ENCODE measurements at regions of chr12 and their contacts with region 1.

Region 1: DNA sequence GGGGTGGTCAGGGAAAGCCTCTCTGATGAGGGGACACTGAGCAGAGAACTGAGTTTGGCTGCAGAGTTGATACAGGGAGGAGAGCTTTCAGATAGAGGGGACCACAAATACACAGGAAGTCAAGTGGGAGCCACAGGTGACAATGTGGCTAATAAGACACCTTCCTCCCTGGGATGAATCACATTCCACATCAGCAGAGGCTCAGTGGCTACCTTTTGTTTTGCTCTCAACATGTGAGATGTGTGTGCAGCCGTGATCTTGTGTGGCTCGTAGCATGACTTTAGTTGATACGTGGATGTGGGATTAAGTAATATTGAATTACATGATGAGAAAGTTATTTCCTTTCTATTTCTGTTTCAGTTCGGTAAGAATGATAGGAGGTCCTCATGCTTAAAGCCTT is 7.5 kb downstream of the CRADD start:
- DNase-seq: no peak
- H3K4me3 Mint-ChIP-seq: peak overlapping the region; percentile 30
- H3K27ac Mint-ChIP-seq: no peak overlapping the region
- H3K4me1 Mint-ChIP-seq: peaks cover 36% of the 10 kb centered on the region
- H3K27me3 Mint-ChIP-seq: no peaks in the 10 kb centered on the region

Region 2: GRCh38 chr12:93699271-93700145 is 14.8 kb after region 1 on chr12:
- CTCF ChIA-PET with region 1: interaction called, 3 read pairs
- intact Hi-C with region 1: loop called (anchors 2 kb)
- DNase-seq: no peak
- H3K4me3 Mint-ChIP-seq: no peak overlapping the region
- H3K27ac Mint-ChIP-seq: no peak overlapping the region
- H3K4me1 Mint-ChIP-seq: peaks cover 37% of the 10 kb centered on the region
- H3K27me3 Mint-ChIP-seq: no peaks in the 10 kb centered on the region

Region 3: GRCh38 chr12:93766796-93767523 is 82.2 kb after region 1 on chr12:
- CTCF ChIA-PET with region 1: no interaction called
- intact Hi-C with region 1: no loop called
- DNase-seq: peak; percentile 71
- H3K4me3 Mint-ChIP-seq: no peak overlapping the region
- H3K27ac Mint-ChIP-seq: no peak overlapping the region
- H3K4me1 Mint-ChIP-seq: peaks cover 17% of the 10 kb centered on the region
- H3K27me3 Mint-ChIP-seq: no peaks in the 10 kb centered on the region

Measured in activated naive CD4-positive, alpha-beta T cell treated with anti-CD3 and anti-CD28 coated beads for 36 hours (primary cell).